ENCODE measurements at regions of chr2 and their contacts with region 1.

Region 1: GRCh38 chr2:156435715-156436496 is at the start of gene GPD2:
- DNase-seq: peak; percentile 91
- H3K4me3 ChIP-seq: peak within 1 kb of the TSS; percentile 63
- H3K27ac ChIP-seq: peak within 1 kb of the TSS; percentile 98
- H3K4me1 ChIP-seq: no peaks in the 10 kb centered on the region
- H3K27me3 ChIP-seq: no peaks in the 10 kb centered on the region
- CTCF ChIP-seq: no peak
- total RNA-seq, gene GPD2: 61.1 to 76.2 TPM

Region 2: GRCh38 chr2:156341452-156342253 is 94.3 kb before region 1 on chr2:
- intact Hi-C with region 1: loop called (anchors 5 kb)
- DNase-seq: peak; percentile 94
- H3K4me3 ChIP-seq: peak overlapping the region; percentile 71
- H3K27ac ChIP-seq: peak overlapping the region; percentile 100
- H3K4me1 ChIP-seq: peaks cover 5% of the 10 kb centered on the region
- H3K27me3 ChIP-seq: no peaks in the 10 kb centered on the region
- CTCF ChIP-seq: no peak

Region 3: GRCh38 chr2:156400706-156401678 is 34.9 kb before region 1 on chr2:
- intact Hi-C with region 1: loop called (anchors 2 kb)
- DNase-seq: peak; percentile 80
- H3K4me3 ChIP-seq: peak overlapping the region; percentile 73
- H3K27ac ChIP-seq: peak overlapping the region; percentile 92
- H3K4me1 ChIP-seq: peaks cover 6% of the 10 kb centered on the region
- H3K27me3 ChIP-seq: no peaks in the 10 kb centered on the region
- CTCF ChIP-seq: no peak

Region 4: DNA sequence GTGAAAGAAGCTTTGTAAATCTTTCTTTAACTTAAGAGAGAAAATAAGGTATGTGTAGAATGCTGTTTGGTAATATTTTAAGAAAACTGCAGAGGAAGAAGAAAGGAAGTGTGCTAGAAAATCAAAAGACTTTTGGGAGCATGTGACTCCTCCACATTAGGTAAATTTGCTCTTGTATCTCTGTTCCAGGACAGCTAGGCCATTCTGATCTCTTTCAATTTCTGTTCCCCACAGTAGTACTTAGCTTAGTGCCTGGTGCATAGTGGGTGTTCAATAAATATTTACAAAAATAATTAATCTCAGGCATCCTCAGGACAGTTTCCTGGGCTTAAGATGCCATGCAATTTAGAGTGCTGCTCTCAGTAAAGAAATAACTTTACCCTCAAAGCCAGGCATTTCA is 105.3 kb after region 1 on chr2:
- intact Hi-C with region 1: no loop called
- DNase-seq: no peak
- H3K4me3 ChIP-seq: no peak overlapping the region
- H3K27ac ChIP-seq: no peak overlapping the region
- H3K4me1 ChIP-seq: no peaks in the 10 kb centered on the region
- H3K27me3 ChIP-seq: no peaks in the 10 kb centered on the region
- CTCF ChIP-seq: no peak

Region 5: GRCh38 chr2:157182834-157183396 is 747.0 kb after region 1 on chr2:
- intact Hi-C with region 1: no loop called
- DNase-seq: no peak
- H3K4me3 ChIP-seq: no peak overlapping the region
- H3K27ac ChIP-seq: no peak overlapping the region
- H3K4me1 ChIP-seq: no peaks in the 10 kb centered on the region
- H3K27me3 ChIP-seq: no peaks in the 10 kb centered on the region
- CTCF ChIP-seq: no peak

Region 6: DNA sequence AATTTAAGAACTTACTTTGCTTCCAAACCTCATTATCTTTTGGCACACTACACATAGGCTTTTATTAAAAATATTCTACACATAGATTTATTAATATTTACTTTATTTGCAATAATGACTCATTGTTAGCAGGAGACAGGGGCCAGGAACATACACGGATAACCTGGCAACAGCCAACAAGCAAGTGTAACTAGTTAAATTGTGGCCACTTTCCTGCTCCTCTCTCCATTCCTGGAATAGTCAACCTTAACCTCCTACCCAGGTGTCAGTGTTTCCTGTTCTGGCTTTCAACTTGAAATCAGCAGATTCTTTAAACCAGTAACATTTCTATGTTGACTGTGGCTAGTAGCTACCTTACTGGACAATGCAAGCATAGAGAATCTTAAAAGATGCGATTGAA is 1413.7 kb after region 1 on chr2:
- intact Hi-C with region 1: no loop called
- DNase-seq: no peak
- H3K4me3 ChIP-seq: no peak overlapping the region
- H3K27ac ChIP-seq: no peak overlapping the region
- H3K4me1 ChIP-seq: no peaks in the 10 kb centered on the region
- H3K27me3 ChIP-seq: no peaks in the 10 kb centered on the region
- CTCF ChIP-seq: no peak

Measured in colonic mucosa (tissue), 4 donors.